ENCODE measurements at regions of chr12 and their contacts with region 1.

Region 1: DNA sequence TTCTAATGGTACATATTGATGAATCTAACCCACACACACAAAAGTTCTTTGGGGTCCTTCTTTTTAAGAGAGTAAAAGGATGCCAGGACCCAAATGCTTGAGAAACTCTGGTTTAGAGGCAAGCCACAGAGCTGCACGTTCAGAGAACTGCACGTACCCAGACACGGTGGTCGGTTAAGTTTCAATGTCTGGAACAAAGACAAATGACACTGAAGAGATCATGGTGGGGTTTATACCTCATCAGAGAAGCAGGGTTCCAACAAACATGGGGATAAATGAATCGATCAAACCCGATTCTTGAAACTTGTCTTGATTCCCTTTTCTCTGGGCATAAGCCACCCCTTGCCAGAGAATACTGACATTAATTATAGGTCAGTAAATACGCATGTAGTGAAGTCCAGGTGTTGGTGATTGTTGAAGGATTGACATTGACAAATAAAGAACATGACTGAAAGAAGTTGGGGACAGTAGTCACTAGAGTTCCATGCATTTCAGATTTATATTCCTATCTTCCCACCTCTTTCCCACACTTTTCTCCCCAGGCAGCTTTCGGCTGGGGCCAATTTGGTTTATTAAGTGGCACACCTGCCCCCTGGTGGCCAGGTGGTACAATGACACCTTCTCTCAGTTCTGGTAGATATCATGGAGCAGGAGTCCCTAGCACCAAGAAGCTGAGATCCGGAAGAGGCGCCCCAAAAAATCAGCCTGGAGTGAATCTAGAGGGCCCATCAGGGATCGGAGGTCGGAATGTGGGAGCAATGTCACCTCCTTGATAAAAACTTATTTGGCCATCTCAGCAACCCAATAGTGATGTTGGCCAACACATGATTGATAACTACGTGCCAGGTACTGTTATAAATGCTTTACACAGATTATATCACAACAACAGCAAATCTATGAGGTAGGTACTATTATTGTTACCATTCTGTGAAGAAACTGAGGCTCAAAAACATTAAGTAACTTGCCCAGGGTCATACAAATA is 17.8 kb upstream of the HDAC7 start:
- DNase-seq: peak; percentile 80
- ATAC-seq: no peak
- H3K4me3 Mint-ChIP-seq: peak overlapping the region; percentile 3
- H3K27ac Mint-ChIP-seq: peak overlapping the region; percentile 49
- H3K4me1 Mint-ChIP-seq: peaks cover 65% of the 10 kb centered on the region
- H3K27me3 Mint-ChIP-seq: no peaks in the 10 kb centered on the region

Region 2: DNA sequence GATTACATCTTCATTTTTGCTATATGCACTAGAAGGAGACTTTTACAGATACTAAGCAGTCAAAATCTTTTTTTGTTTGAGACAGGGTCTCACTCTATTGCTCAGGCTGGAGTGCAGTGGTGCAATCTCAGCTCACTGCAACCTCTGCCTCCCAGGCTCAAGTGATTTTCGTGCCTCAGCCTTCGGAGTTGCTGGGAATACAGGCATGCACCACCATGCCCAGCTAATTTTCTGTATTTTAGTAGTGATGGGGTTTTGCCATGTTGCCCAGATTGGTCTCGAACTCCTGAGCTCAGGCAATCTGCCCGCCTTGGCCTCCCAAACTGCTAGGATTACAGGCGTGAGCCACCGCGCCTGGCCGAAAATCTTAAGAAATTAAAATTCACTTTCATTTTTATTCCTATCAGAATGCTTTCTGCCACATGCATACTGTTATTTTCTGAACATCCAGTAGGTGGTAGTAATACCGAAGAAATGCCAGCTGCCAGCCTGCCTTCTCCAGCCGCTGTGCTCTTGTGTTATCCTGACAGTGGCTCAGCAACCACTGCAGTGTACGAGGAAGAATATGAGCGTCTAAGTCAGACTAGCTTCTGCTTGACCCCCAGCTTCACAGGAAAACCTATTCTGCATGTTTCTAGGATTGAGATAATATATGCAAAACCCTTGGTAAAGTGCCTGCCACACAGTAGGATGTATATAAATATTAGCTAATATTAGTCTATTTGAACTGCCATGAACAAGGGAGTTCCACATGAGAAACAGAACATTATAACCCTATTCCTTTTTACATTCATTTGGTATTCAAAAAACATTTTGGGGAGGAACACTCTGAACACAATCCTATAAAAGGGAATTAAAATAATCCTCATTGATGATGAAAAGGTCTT is 185.9 kb before region 1 on chr12:
- CTCF ChIA-PET with region 1: interaction called, 5 read pairs
- POLR2A ChIA-PET with region 1: no interaction called
- intact Hi-C with region 1: loop called in 1 of 2 experiments (anchors 1 kb)
- DNase-seq: peak; percentile 70
- ATAC-seq: peak; percentile 93
- H3K4me3 Mint-ChIP-seq: no peak overlapping the region
- H3K27ac Mint-ChIP-seq: peak overlapping the region; percentile 11
- H3K4me1 Mint-ChIP-seq: peaks cover 20% of the 10 kb centered on the region
- H3K27me3 Mint-ChIP-seq: no peaks in the 10 kb centered on the region

Region 3: GRCh38 chr12:47767216-47767724 is 70.2 kb before region 1 on chr12:
- CTCF ChIA-PET with region 1: interaction called, 55 read pairs
- POLR2A ChIA-PET with region 1: no interaction called
- intact Hi-C with region 1: no loop called
- DNase-seq: peak; percentile 88
- ATAC-seq: peak; percentile 89
- H3K4me3 Mint-ChIP-seq: no peak overlapping the region
- H3K27ac Mint-ChIP-seq: no peak overlapping the region
- H3K4me1 Mint-ChIP-seq: no peaks in the 10 kb centered on the region
- H3K27me3 Mint-ChIP-seq: peaks cover 4% of the 10 kb centered on the region

Region 4: DNA sequence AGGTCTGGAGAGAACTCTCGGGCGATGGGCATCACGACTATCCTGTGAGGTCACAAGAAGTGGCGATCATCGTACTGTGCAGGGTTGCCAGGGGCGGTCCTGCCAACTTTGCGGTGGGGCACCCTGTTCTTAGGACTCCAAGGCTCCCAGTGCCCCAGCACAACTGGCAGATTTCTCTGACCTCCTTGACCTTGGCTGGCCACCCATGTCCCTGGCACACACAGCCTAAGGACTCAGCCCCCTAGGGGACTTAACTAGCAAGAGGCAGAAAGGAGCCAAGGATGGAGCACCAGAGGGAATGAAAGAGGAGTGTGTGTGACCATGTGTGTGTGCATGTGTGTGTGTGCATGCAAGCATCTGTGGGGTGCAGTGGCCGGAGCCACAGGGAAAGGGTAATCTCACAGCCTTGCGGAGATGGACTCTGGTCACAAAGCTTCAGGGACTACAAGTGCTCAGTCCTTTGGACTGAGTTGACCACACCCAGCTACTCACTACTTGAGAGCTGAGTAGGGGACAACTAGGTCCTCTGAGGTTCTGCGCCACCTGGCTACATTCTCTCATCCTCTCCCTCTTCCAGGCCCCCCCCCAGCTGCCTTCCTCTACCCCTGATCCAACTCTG is 50.7 kb before region 1 on chr12:
- CTCF ChIA-PET with region 1: interaction called, 90 read pairs
- POLR2A ChIA-PET with region 1: interaction called, 3 read pairs
- intact Hi-C with region 1: no loop called
- DNase-seq: no peak
- ATAC-seq: no peak
- H3K4me3 Mint-ChIP-seq: no peak overlapping the region
- H3K27ac Mint-ChIP-seq: peak overlapping the region; percentile 78
- H3K4me1 Mint-ChIP-seq: peaks cover 32% of the 10 kb centered on the region
- H3K27me3 Mint-ChIP-seq: no peaks in the 10 kb centered on the region

Region 5: GRCh38 chr12:47812797-47813510 is 24.5 kb before region 1 on chr12:
- CTCF ChIA-PET with region 1: interaction called, 303 read pairs
- POLR2A ChIA-PET with region 1: interaction called, 215 read pairs
- intact Hi-C with region 1: loop called (anchors 1 kb)
- DNase-seq: peak; percentile 98
- ATAC-seq: peak; percentile 59
- H3K4me3 Mint-ChIP-seq: peak overlapping the region; percentile 94
- H3K27ac Mint-ChIP-seq: peak overlapping the region; percentile 98
- H3K4me1 Mint-ChIP-seq: peaks cover 81% of the 10 kb centered on the region
- H3K27me3 Mint-ChIP-seq: no peaks in the 10 kb centered on the region

Region 6: DNA sequence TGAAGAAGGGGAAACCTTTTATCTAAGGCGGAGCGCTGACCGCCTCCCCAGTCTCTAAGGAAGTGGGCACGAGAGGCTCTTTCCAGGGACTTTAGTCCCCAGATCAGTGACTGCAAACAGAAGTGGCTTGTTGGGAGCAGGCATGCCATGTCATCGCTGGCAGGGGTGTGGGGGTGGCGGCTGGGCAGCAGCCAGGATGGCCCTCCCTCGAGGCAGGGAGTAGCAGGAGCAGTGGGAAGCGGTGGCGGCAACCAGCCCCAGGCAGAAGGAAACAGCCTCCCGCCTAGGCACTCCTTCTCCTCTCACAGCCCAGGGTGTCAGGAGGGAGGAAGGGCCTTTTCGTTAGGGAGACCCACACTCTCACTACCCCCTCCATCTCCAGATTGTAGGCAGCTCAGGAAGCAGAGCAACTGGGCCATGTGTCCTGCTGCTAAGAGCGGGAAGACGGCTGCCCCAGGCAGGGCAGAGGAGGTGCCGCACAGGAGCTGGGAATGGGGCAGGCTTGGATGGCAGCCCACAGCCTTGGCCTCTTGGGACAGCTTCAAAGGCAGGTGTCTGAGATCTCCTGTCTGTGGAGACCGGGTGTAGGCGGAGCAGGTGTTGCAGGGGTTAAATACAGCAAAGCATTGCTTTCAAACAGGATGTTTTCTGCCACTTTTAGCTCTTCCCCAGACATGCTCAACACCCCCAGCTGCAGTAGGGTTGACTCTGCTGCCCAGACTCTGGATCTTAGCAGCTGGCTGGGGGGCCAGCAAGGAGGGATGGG is 45.5 kb after region 1 on chr12:
- CTCF ChIA-PET with region 1: interaction called, 16 read pairs
- POLR2A ChIA-PET with region 1: interaction called, 14 read pairs
- intact Hi-C with region 1: loop called in 1 of 2 experiments (anchors 1 kb)
- DNase-seq: peak; percentile 70
- ATAC-seq: peak; percentile 14
- H3K4me3 Mint-ChIP-seq: peak overlapping the region; percentile 78
- H3K27ac Mint-ChIP-seq: peak overlapping the region; percentile 97
- H3K4me1 Mint-ChIP-seq: peaks cover 81% of the 10 kb centered on the region
- H3K27me3 Mint-ChIP-seq: no peaks in the 10 kb centered on the region

Region 7: DNA sequence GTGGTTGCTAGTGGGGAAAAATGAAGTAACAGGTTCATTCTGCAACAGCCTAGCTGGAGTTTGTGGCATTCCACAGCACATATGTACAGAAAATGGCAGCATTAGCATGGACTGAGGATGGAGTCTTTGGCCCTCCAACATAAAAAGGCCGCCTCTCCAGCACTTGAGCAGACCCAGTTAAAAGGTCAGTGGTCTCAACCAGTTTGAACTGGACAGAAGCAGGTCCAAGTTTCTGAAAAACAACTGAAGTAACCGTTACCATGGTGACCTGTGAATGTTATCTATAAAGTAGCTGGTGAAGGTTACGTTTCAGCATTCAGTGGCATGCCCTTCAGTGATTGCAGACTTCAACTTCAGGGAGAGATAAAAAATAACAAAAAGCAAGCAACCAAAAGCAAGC is 399.7 kb after region 1 on chr12:
- CTCF ChIA-PET with region 1: no interaction called
- POLR2A ChIA-PET with region 1: no interaction called
- intact Hi-C with region 1: no loop called
- DNase-seq: no peak
- ATAC-seq: no peak
- H3K4me3 Mint-ChIP-seq: no peak overlapping the region
- H3K27ac Mint-ChIP-seq: no peak overlapping the region
- H3K4me1 Mint-ChIP-seq: no peaks in the 10 kb centered on the region
- H3K27me3 Mint-ChIP-seq: peaks cover 3% of the 10 kb centered on the region

Measured in activated CD4-positive, alpha-beta T cell treated with anti-CD3 and anti-CD28 coated beads for 36 hours (primary cell).